ENCODE measurements at regions of chr1 and their contacts with region 1.

Region 1: DNA sequence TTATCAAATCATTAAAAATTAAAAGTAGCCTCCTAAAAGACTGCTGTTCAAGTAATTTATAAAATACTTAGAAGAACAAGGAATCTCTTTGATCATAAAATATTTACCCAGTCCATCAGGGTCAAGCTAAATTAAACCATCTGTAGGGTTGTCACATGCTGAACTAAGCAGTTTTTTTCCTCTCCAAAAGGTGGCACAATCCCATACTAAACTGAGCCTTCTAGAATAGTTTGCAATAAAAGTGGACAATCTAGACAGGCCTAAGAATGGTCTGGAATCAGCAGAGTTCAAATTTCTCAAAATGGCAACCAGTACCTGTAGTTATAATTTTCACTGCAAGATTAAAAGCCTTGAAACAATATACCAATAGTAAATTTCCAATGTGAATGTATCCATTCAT is 194.8 kb downstream of the EIF4G3 start:
- DNase-seq: no peak
- H3K4me3 Mint-ChIP-seq: no peak overlapping the region
- H3K27ac Mint-ChIP-seq: no peak overlapping the region
- H3K4me1 Mint-ChIP-seq: peaks cover 4% of the 10 kb centered on the region
- H3K27me3 Mint-ChIP-seq: no peaks in the 10 kb centered on the region

Region 2: GRCh38 chr1:21022279-21023040 is 40.5 kb after region 1 on chr1:
- intact Hi-C with region 1: no loop called
- DNase-seq: peak; percentile 79
- H3K4me3 Mint-ChIP-seq: peak overlapping the region; percentile 70
- H3K27ac Mint-ChIP-seq: peak overlapping the region; percentile 88
- H3K4me1 Mint-ChIP-seq: peaks cover 20% of the 10 kb centered on the region
- H3K27me3 Mint-ChIP-seq: no peaks in the 10 kb centered on the region

Region 3: GRCh38 chr1:21200767-21201166 is 218.9 kb after region 1 on chr1:
- intact Hi-C with region 1: loop called (anchors 5 kb)
- DNase-seq: no peak
- H3K4me3 Mint-ChIP-seq: no peak overlapping the region
- H3K27ac Mint-ChIP-seq: no peak overlapping the region
- H3K4me1 Mint-ChIP-seq: no peaks in the 10 kb centered on the region
- H3K27me3 Mint-ChIP-seq: peaks cover 8% of the 10 kb centered on the region